ENCODE measurements at regions of chr6 and their contacts with region 1.

Region 1: GRCh38 chr6:87929843-87930288 is 117.8 kb upstream of the SPACA1 start:
- DNase-seq: peak; percentile 84
- H3K4me3 Mint-ChIP-seq: no peak overlapping the region
- H3K27ac Mint-ChIP-seq: no peak overlapping the region
- H3K4me1 Mint-ChIP-seq: peaks cover 22% of the 10 kb centered on the region
- H3K27me3 Mint-ChIP-seq: no peaks in the 10 kb centered on the region
- CTCF ChIP-seq: peak; percentile 52

Region 2: GRCh38 chr6:86581833-86582232 is 1348.0 kb before region 1 on chr6:
- CTCF ChIA-PET with region 1: no interaction called
- intact Hi-C with region 1: no loop called
- DNase-seq: peak; percentile 61
- H3K4me3 Mint-ChIP-seq: no peak overlapping the region
- H3K27ac Mint-ChIP-seq: peak overlapping the region; percentile 69
- H3K4me1 Mint-ChIP-seq: peaks cover 19% of the 10 kb centered on the region
- H3K27me3 Mint-ChIP-seq: no peaks in the 10 kb centered on the region
- CTCF ChIP-seq: no peak

Region 3: DNA sequence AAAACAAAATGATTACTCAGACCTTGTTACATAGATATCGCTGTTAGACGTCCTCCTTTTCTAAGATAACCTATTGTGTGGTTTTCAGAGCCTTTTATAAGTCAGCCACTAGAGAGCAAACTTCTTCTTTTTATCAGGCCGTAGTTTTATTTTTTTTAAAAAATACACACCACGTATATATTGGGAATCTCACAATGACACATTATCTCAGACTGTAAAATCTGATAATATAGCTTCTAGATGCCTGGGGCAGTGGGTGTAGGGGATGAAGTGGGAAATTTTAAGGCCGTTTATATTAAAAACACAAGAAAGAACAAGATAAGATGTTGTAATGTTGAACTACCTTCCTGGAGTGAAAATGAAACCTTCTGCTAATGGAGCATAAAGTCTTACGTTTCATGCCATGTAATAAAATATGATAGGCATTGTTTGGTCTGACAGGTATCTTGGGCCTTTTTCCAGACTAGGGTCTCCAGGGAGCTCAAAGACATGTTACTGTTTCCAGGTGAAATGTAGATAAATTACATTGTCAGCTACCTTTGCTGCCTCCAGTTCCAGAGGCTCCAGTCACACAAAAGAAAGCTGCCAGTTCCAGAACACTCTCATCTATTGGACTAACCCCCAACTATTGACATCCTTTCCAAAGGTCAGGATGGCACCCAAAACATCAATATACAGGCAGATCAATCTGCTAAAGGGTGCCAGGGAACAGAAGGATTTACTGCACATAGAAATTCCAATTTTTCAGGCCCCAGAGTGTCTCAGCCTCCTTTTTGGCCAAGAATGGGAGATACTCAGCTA is 97.6 kb before region 1 on chr6:
- CTCF ChIA-PET with region 1: interaction called, 3 read pairs
- intact Hi-C with region 1: loop called (anchors 2 kb)
- DNase-seq: no peak
- H3K4me3 Mint-ChIP-seq: peak overlapping the region; percentile 39
- H3K27ac Mint-ChIP-seq: peak overlapping the region; percentile 35
- H3K4me1 Mint-ChIP-seq: peaks cover 8% of the 10 kb centered on the region
- H3K27me3 Mint-ChIP-seq: no peaks in the 10 kb centered on the region
- CTCF ChIP-seq: no peak

Region 4: DNA sequence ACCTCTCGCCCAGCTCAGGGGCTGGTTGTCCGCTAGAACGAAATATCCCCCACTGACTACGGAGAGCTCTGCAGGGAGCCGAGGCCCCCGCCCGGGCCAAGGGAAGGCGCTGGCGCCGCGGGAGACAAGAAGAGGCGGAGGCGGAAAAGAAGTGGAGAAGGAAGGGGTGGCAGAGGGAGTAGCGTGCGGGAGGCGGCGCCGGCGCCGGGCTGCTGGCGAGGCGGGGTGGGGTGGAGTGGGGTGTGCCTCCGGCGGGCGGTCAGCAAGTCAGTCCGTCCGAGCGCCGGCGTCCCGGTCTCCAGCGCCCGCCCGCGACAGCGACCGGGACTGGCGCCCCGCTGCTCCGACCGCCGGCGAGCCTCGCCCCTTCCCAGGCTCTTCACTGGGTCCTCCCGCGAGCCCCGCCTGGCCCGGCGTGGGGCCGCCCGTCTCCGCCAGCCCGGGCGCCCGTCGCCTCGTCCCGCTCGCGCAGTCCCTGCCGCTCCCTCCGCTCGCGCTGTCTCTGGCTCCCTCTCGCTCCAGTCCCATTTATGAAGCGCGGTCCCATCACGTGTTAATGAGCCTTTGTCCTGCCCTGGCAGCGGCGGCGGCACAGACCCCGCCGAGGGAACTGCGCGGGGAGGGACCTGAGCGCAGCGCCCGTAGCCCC is 236.1 kb after region 1 on chr6 and contains the start of gene CNR1:
- CTCF ChIA-PET with region 1: no interaction called
- intact Hi-C with region 1: loop called (anchors 1 kb)
- DNase-seq: peak; percentile 64
- H3K4me3 Mint-ChIP-seq: peak within 1 kb of the TSS; percentile 78
- H3K27ac Mint-ChIP-seq: no peak within 1 kb of the TSS
- H3K4me1 Mint-ChIP-seq: no peaks in the 10 kb centered on the region
- H3K27me3 Mint-ChIP-seq: peaks cover 69% of the 10 kb centered on the region
- CTCF ChIP-seq: no peak
- total RNA-seq, gene CNR1: 0.31 and 0.69 TPM in 2 replicates

Region 5: GRCh38 chr6:88492824-88493223 is 563.0 kb after region 1 on chr6:
- CTCF ChIA-PET with region 1: interaction called, 10 read pairs
- intact Hi-C with region 1: loop called (anchors 1 kb)
- DNase-seq: peak; percentile 9
- H3K4me3 Mint-ChIP-seq: no peak overlapping the region
- H3K27ac Mint-ChIP-seq: no peak overlapping the region
- H3K4me1 Mint-ChIP-seq: no peaks in the 10 kb centered on the region
- H3K27me3 Mint-ChIP-seq: no peaks in the 10 kb centered on the region
- CTCF ChIP-seq: peak; percentile 26

Region 6: GRCh38 chr6:88870717-88871330 is 941.0 kb after region 1 on chr6:
- CTCF ChIA-PET with region 1: no interaction called
- intact Hi-C with region 1: loop called (anchors 2 kb)
- DNase-seq: peak; percentile 56
- H3K4me3 Mint-ChIP-seq: no peak overlapping the region
- H3K27ac Mint-ChIP-seq: no peak overlapping the region
- H3K4me1 Mint-ChIP-seq: peaks cover 14% of the 10 kb centered on the region
- H3K27me3 Mint-ChIP-seq: no peaks in the 10 kb centered on the region
- CTCF ChIP-seq: no peak